Activated CD4-positive, alpha-beta memory T cell treated with anti-CD3 and anti-CD28 coated beads, Interleukin-2, amount 10 ng/mL, durations not matched to agents 7 days and 5 days (primary cell): ENCODE measurements at regions of chr11 and their contacts with region 1.

Region 1: DNA sequence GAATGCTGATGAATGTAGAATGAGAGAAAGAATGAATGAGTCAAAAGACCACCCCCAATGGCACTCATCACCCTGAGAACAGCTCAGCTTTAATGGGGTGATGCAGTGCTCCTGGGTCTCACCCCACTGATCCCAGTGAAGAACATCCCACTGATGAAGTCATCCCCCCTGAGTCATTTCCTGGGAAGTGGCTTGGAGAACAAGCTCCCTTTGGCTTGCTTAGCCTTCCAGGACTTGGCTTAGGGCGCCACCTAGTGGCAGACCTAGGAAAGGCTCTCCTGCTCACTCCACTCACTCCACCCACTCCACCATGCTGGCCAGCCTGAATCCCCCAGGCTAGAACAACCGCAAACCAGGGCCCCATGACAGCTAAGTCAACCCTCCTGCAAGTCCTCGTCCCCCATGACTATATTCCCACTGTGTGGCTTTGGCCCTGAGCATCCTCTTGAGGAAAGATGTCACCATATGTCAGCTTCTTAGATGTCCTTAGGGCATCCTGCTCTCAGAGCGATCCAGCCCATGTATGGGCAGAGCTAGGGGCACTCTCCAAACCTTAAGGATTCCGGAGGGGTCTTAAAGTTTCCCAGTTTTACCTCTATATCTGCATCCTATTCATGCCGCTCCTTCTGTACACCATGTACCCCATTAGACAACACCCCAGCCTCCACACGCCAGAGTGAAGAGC is 17.8 kb upstream of the TMPRSS13 start:
- DNase-seq: peak; percentile 85
- H3K4me3 Mint-ChIP-seq: no peak overlapping the region
- H3K27ac Mint-ChIP-seq: peak overlapping the region; percentile 43
- H3K4me1 Mint-ChIP-seq: peaks cover 84% of the 10 kb centered on the region
- H3K27me3 Mint-ChIP-seq: no peaks in the 10 kb centered on the region

Region 2: DNA sequence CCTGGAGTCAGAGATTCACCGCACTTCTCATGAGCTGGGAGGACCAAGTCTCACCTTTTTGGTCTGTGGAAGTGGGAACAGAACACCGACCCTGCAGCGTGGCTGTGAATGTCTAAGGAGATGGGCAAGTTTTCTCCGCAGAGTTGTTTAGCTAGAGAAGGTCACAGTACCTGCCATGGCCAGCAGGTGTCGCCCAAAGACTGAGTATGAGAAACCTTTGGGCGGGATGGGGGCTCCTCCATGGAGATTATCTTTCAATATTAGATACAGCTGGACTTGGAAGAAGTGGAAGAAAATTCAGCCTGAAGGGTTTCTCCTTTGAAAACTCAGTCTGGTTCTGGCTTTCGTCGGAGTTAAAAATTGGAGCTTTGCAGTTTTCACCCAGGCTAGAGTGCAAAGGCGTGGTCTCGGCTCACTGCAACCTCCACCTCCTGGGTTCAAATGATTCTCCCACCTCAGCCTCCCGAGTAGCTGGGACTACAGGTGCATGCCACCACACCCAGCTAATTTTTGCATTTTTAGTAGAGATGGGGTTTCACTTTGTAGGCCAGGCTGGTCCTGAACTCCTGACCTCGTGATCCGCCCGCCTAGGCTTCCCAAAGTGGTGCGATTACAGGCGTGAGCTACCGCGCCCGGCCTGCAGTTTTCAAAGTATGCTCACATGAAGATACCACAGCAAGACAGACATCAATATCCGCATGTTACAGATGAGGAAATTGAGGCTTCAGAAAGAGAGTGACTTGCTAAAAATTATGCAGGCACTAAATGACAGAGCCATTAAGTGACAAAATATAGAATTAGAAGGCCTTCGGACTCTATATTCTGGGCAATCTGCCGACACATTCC is 139.3 kb before region 1 on chr11:
- CTCF ChIA-PET with region 1: interaction called, 104 read pairs
- POLR2A ChIA-PET with region 1: interaction called, 6 read pairs
- DNase-seq: peak; percentile 78
- H3K4me3 Mint-ChIP-seq: no peak overlapping the region
- H3K27ac Mint-ChIP-seq: no peak overlapping the region
- H3K4me1 Mint-ChIP-seq: peaks cover 18% of the 10 kb centered on the region
- H3K27me3 Mint-ChIP-seq: peaks cover 26% of the 10 kb centered on the region

Region 3: GRCh38 chr11:117843666-117844484 is 103.1 kb before region 1 on chr11:
- CTCF ChIA-PET with region 1: interaction called, 171 read pairs
- POLR2A ChIA-PET with region 1: interaction called, 7 read pairs
- DNase-seq: peak; percentile 85
- H3K4me3 Mint-ChIP-seq: no peak overlapping the region
- H3K27ac Mint-ChIP-seq: no peak overlapping the region
- H3K4me1 Mint-ChIP-seq: peaks cover 1% of the 10 kb centered on the region
- H3K27me3 Mint-ChIP-seq: peaks cover 6% of the 10 kb centered on the region

Region 4: GRCh38 chr11:117919781-117920221 is 27.2 kb before region 1 on chr11:
- CTCF ChIA-PET with region 1: interaction called, 16 read pairs
- POLR2A ChIA-PET with region 1: no interaction called
- DNase-seq: no peak
- H3K4me3 Mint-ChIP-seq: no peak overlapping the region
- H3K27ac Mint-ChIP-seq: peak overlapping the region; percentile 29
- H3K4me1 Mint-ChIP-seq: peaks cover 9% of the 10 kb centered on the region
- H3K27me3 Mint-ChIP-seq: peaks cover 1% of the 10 kb centered on the region

Region 5: GRCh38 chr11:117970400-117971024 is 23.5 kb after region 1 on chr11:
- CTCF ChIA-PET with region 1: interaction called, 11 read pairs
- POLR2A ChIA-PET with region 1: interaction called, 52 read pairs
- DNase-seq: peak; percentile 58
- H3K4me3 Mint-ChIP-seq: peak overlapping the region; percentile 29
- H3K27ac Mint-ChIP-seq: peak overlapping the region; percentile 70
- H3K4me1 Mint-ChIP-seq: peaks cover 62% of the 10 kb centered on the region
- H3K27me3 Mint-ChIP-seq: no peaks in the 10 kb centered on the region

Region 6: DNA sequence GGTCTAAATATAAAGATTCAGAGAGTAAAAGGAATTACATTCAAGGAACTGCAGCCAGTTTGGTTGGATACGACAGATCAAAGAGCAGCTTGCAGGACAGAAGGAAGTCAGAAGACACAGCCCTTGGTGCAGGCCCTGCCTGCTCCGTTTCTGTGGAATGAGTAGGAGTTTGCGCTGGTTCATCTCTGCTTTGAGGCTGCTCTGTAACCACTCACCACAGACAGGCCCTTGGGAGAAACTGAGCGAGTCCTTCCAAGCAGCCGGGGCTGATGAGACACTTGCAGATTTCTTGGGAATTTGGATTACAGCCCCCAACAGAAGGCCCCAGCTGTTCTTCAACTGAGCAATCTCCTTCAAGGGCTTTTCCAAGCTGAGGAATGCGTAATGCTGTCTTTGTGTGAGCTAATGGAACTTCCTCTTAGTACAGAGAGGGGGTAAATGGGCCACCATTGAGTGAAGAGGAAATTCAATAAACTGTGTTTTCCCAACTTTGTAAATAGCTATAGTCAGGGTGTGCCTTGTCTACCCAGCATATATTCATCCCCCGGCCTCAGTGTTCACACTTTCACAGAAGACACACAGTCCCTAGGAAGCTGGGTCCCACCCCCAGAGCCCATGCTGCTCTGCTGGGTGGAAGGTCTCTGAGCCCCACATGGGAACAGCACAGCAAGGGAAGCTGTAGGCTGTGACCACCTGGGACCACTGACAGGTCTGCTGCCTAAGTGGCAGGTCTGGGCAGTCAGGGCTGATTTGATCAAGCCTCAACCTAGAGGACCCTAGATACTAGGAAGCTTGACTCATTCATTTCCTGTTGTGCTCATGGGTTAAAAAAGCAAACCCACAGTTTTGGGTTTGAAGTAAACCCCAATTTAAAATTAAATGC is 55.8 kb after region 1 on chr11:
- CTCF ChIA-PET with region 1: interaction called, 38 read pairs
- POLR2A ChIA-PET with region 1: interaction called, 878 read pairs
- DNase-seq: peak; percentile 73
- H3K4me3 Mint-ChIP-seq: peak overlapping the region; percentile 58
- H3K27ac Mint-ChIP-seq: peak overlapping the region; percentile 99
- H3K4me1 Mint-ChIP-seq: peaks cover 100% of the 10 kb centered on the region
- H3K27me3 Mint-ChIP-seq: no peaks in the 10 kb centered on the region

Region 7: GRCh38 chr11:118060869-118061268 is 113.9 kb after region 1 on chr11:
- CTCF ChIA-PET with region 1: interaction called, 333 read pairs
- POLR2A ChIA-PET with region 1: interaction called, 3 read pairs
- DNase-seq: no peak
- H3K4me3 Mint-ChIP-seq: no peak overlapping the region
- H3K27ac Mint-ChIP-seq: no peak overlapping the region
- H3K4me1 Mint-ChIP-seq: peaks cover 7% of the 10 kb centered on the region
- H3K27me3 Mint-ChIP-seq: peaks cover 24% of the 10 kb centered on the region